ENCODE measurements at regions of chr2 and their contacts with region 1.

Region 1: GRCh38 chr2:72887754-72888437 is 688 bp downstream of the SPR start:
- DNase-seq: peak in 4 of 5 donors; percentile 20 to 60 (median 27)
- H3K4me3 ChIP-seq: peak overlapping the region; percentile 65
- H3K4me3 Mint-ChIP-seq: peak overlapping the region; percentile 77 to 90 (median 79)
- H3K27ac ChIP-seq: peak overlapping the region; percentile 47
- H3K27ac Mint-ChIP-seq: no peak overlapping the region
- H3K4me1 ChIP-seq: peaks cover 8% of the 10 kb centered on the region
- H3K4me1 Mint-ChIP-seq: peaks cover 0 to 12% (median 5%) of the 10 kb centered on the region in 3 donors
- H3K27me3 ChIP-seq: peaks cover 29% of the 10 kb centered on the region
- H3K27me3 Mint-ChIP-seq: peaks cover 32 to 72% of the 10 kb centered on the region in 2 donors

Region 2: GRCh38 chr2:72862239-72862988 is 25.5 kb before region 1 on chr2:
- CTCF ChIA-PET with region 1: interaction called, 15 read pairs
- POLR2A ChIA-PET with region 1: no interaction called
- DNase-seq: peak; percentile 75 to 87 (median 77)
- H3K4me3 ChIP-seq: no peak overlapping the region
- H3K4me3 Mint-ChIP-seq: peak overlapping the region in 6 of 7 donors; percentile 58 to 76 (median 65)
- H3K27ac ChIP-seq: no peak overlapping the region
- H3K27ac Mint-ChIP-seq: peak overlapping the region in 1 of 8 donors; percentile 18
- H3K4me1 ChIP-seq: no peaks in the 10 kb centered on the region
- H3K4me1 Mint-ChIP-seq: peaks cover 8 to 13% (median 10%) of the 10 kb centered on the region in 3 donors
- H3K27me3 ChIP-seq: peaks cover 14% of the 10 kb centered on the region
- H3K27me3 Mint-ChIP-seq: peaks cover 40 to 71% of the 10 kb centered on the region in 2 donors

Region 3: DNA sequence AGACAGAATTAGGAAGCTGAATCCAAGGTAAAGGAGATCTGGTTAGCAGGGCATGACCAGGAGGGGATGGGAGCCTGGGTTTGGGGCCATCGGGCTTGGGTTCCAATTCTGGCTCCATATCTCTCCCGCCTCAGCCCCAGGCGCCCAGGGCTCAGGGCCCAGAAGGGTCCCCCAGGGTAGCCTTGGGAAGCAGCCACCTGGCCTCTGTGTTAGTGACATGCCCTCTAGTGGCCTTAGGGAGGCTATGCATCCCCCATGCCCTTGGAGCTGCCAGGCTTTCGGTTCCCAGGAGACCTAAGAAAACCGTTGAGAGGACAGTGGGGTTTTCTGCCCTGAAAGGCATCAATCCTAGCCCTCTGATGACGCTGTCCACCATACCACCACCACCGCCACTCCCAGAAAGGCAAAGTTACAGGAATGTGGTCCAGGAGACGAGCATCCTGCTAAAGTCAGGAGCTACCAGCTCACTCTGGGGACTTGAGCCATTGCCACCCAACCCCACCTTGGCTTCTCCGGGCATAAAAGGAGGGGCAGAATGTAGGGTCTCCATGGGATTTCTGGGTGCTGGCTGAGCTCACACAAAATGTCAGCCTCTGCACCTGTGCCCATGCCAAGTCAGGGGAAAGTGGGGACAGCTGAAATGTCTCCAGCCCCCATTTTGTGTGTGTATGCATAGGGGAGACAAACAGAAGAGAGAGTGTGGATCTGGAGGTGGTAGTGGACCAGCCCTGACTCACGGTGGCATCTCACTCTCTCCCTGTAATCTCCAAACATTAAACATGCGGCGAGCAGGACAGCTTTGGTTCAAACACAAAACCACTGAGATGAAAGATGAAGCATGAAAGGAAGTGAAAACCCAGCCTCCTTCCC is 85.9 kb after region 1 on chr2:
- CTCF ChIA-PET with region 1: interaction called, 19 read pairs
- POLR2A ChIA-PET with region 1: no interaction called
- DNase-seq: peak in 2 of 5 donors; percentile 8 to 20
- H3K4me3 ChIP-seq: no peak overlapping the region
- H3K4me3 Mint-ChIP-seq: no peak overlapping the region
- H3K27ac ChIP-seq: no peak overlapping the region
- H3K27ac Mint-ChIP-seq: no peak overlapping the region
- H3K4me1 ChIP-seq: no peaks in the 10 kb centered on the region
- H3K4me1 Mint-ChIP-seq: no peaks in the 10 kb centered on the region
- H3K27me3 ChIP-seq: no peaks in the 10 kb centered on the region
- H3K27me3 Mint-ChIP-seq: peaks cover 0 to 2% of the 10 kb centered on the region in 2 donors

Measured in CD8-positive, alpha-beta memory T cell (primary cell).